Caco-2 (cell line): ENCODE measurements at regions of chr10 and their contacts with region 1.

Region 1: DNA sequence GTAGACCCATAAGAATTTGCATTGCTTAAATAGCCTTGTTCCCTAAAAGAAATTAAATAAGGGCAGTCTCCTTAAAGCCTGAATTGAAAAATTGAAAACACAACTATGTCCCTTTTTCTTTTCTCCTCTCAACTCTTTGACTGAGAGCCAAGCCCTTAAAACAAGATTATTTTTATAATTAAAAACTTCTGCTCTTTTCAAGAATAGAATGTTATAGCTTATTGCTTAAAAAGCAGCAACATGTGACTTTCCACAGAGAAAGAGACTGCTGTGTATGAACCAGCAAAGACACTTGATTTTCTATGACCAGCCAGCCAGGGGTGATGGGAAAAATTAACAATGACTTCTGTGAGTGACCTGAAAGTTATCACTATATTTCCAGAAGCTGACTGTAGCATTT is 295.2 kb upstream of the CELF2 start:
- DNase-seq: no peak
- H3K4me3 ChIP-seq: no peak overlapping the region
- H3K4me3 Mint-ChIP-seq: no peak overlapping the region
- H3K27ac Mint-ChIP-seq: no peak overlapping the region
- H3K4me1 ChIP-seq: no peaks in the 10 kb centered on the region
- H3K4me1 Mint-ChIP-seq: no peaks in the 10 kb centered on the region
- H3K27me3 ChIP-seq: 0 out of 2 replicates have a peak, but pooled peaks cover 1% of the 10 kb centered on the region
- H3K27me3 Mint-ChIP-seq: peaks cover 17% of the 10 kb centered on the region
- CTCF ChIP-seq: no peak

Region 2: DNA sequence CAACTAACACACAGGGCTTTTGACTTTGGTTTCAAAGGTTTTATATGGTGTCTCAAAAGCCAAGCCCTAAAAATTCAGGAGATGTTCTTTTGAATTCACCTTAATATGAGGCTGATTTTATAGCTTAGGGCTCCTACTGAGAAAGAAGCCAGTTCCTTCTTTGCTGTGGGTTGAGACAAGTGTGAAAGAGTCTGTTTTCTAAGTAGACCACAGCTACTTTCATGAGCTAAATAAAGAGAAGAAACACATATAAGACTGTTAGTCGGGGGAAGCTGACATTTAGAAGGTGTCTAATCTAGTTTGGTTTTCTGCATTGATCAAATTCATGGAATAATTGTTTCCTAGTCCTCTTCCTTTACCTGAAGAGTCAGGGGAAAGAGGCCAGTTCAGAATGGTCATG is 36.9 kb before region 1 on chr10:
- CTCF ChIA-PET with region 1: no interaction called
- POLR2A ChIA-PET with region 1: no interaction called
- intact Hi-C with region 1: no loop called
- DNase-seq: no peak
- H3K4me3 ChIP-seq: no peak overlapping the region
- H3K4me3 Mint-ChIP-seq: no peak overlapping the region
- H3K27ac Mint-ChIP-seq: no peak overlapping the region
- H3K4me1 ChIP-seq: peaks cover 12% of the 10 kb centered on the region
- H3K4me1 Mint-ChIP-seq: peaks cover under 1% of the 10 kb centered on the region
- H3K27me3 ChIP-seq: no peaks in the 10 kb centered on the region
- H3K27me3 Mint-ChIP-seq: peaks cover 15% of the 10 kb centered on the region
- CTCF ChIP-seq: no peak

Region 3: DNA sequence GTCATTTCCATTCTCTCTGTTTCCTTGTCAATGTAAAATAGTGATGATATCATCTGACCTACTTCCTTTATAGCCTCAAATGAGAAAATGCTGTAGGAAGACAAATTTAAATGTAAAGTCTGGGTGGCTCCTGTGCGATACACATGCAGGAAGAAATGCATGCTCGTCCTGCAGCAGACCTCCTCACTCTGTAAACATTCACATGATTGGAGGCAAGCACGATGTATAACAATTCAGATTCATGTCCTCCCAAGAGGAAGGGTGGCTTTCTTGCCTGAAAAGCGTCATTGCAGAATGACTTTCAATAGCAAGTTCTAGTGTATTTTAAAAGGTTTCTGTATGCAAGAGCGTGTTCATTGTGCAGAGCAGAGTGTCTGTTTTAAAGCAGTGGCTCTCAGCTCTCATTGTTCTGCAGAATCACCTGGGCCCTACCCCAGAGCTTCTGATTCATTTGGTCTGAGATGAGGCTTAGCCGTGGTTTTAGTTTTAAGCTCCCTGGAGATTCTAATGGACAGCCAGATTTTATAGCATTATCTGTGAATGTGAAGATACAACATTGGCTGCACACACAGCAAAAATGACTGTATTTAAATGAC is 125.0 kb after region 1 on chr10:
- CTCF ChIA-PET with region 1: no interaction called
- POLR2A ChIA-PET with region 1: no interaction called
- intact Hi-C with region 1: no loop called
- DNase-seq: no peak
- H3K4me3 ChIP-seq: no peak overlapping the region
- H3K4me3 Mint-ChIP-seq: no peak overlapping the region
- H3K27ac Mint-ChIP-seq: no peak overlapping the region
- H3K4me1 ChIP-seq: no peaks in the 10 kb centered on the region
- H3K4me1 Mint-ChIP-seq: no peaks in the 10 kb centered on the region
- H3K27me3 ChIP-seq: no peaks in the 10 kb centered on the region
- H3K27me3 Mint-ChIP-seq: peaks cover 16% of the 10 kb centered on the region
- CTCF ChIP-seq: no peak

Region 4: DNA sequence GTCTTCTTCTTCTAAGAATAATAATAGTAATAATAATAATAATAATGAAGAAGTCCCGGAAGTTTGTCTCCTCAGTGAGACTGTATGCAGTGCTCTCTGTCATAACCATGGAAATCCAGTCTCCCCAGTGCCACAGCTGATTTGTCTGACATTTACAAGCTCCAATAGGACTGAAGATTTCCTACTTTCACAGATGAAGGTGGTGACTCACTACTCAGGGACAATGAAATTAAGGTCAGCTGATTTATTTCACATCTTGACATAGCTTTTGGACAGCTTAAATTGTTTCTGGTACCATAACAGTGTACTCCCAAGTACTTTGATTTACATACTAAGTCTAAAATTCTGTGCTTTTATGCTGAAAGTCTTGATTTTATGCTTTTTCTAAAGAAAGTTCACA is 302.2 kb after region 1 on chr10:
- CTCF ChIA-PET with region 1: interaction called, 3 read pairs
- POLR2A ChIA-PET with region 1: interaction called, 11 read pairs
- intact Hi-C with region 1: no loop called
- DNase-seq: no peak
- H3K4me3 ChIP-seq: no peak overlapping the region
- H3K4me3 Mint-ChIP-seq: no peak overlapping the region
- H3K27ac Mint-ChIP-seq: no peak overlapping the region
- H3K4me1 ChIP-seq: no peaks in the 10 kb centered on the region
- H3K4me1 Mint-ChIP-seq: no peaks in the 10 kb centered on the region
- H3K27me3 ChIP-seq: 0 out of 2 replicates have a peak, but pooled peaks cover 2% of the 10 kb centered on the region
- H3K27me3 Mint-ChIP-seq: peaks cover 25% of the 10 kb centered on the region
- CTCF ChIP-seq: no peak